Posterior cingulate gyrus (tissue), 11 donors: ENCODE measurements at regions of chr3 and their contacts with region 1.

Region 1: GRCh38 chr3:4533489-4534443 is 40.6 kb downstream of the ITPR1 start:
- DNase-seq: peak in 2 of 10 donors; percentile 12 to 16

Region 2: GRCh38 chr3:4584456-4585249 is 50.9 kb after region 1 on chr3:
- intact Hi-C with region 1: loop called (anchors 10 kb)
- DNase-seq: no peak

Region 3: DNA sequence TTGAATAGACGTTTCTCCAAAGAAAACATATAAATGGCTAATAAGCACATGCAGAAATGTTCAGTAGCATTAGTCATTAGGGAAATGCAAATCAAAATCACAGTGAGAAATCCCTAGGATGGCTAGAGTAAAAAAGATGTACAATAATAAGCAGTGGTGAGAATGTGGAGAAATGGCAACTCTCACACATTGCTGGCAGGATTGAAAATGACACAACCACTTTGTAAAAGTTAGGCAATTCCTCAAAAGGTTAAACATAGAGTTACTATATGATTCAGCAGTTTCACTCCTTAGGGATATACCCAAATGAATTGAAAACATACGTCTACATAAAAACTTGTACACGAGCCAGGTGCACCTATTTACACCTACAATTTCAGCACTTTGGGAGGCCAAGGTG is 68.1 kb after region 1 on chr3:
- intact Hi-C with region 1: no loop called
- DNase-seq: no peak

Region 4: GRCh38 chr3:5112043-5112442 is 578.3 kb after region 1 on chr3:
- intact Hi-C with region 1: no loop called
- DNase-seq: no peak